ENCODE measurements at regions of chr1 and their contacts with region 1.

Region 1: GRCh38 chr1:46247436-46248121 is at the start of gene RAD54L:
- DNase-seq: peak; percentile 100
- ATAC-seq: peak; percentile 91
- H3K4me3 Mint-ChIP-seq: peak within 1 kb of the TSS; percentile 95
- H3K27ac Mint-ChIP-seq: peak within 1 kb of the TSS; percentile 99
- H3K4me1 Mint-ChIP-seq: peaks cover 24% of the 10 kb centered on the region
- H3K27me3 Mint-ChIP-seq: no peaks in the 10 kb centered on the region
- CTCF ChIP-seq: no peak
- total RNA-seq, gene RAD54L: 64.6 to 65.1 TPM

Region 2: DNA sequence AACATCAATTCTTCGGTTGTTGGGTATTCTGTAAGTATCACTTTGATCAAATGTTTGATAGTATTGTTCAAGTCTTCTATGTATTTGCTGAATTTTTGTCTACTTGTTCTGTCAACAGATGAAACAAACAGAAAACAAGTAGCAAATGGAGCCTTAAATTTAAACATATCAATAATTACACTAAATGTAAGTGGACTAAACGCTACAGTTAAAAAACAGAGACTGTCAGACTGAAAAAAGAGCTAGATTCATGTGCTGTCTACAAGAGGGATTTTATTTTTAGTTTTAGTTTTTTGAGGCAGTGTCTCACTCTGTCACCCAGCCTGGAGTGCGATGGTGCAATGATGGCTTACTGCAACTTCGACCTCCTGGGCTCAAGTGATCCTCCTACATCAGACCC is 10.7 kb before region 1 on chr1:
- CTCF ChIA-PET with region 1: interaction called, 11 read pairs
- POLR2A ChIA-PET with region 1: no interaction called
- intact Hi-C with region 1: no loop called
- DNase-seq: no peak
- ATAC-seq: no peak
- H3K4me3 Mint-ChIP-seq: no peak overlapping the region
- H3K27ac Mint-ChIP-seq: no peak overlapping the region
- H3K4me1 Mint-ChIP-seq: no peaks in the 10 kb centered on the region
- H3K27me3 Mint-ChIP-seq: no peaks in the 10 kb centered on the region
- CTCF ChIP-seq: no peak

Region 3: GRCh38 chr1:46262508-46262907 is 14.9 kb after region 1 on chr1:
- CTCF ChIA-PET with region 1: interaction called, 6 read pairs
- POLR2A ChIA-PET with region 1: interaction called, 27 read pairs
- intact Hi-C with region 1: no loop called
- DNase-seq: no peak
- ATAC-seq: no peak
- H3K4me3 Mint-ChIP-seq: no peak overlapping the region
- H3K27ac Mint-ChIP-seq: no peak overlapping the region
- H3K4me1 Mint-ChIP-seq: no peaks in the 10 kb centered on the region
- H3K27me3 Mint-ChIP-seq: no peaks in the 10 kb centered on the region
- CTCF ChIP-seq: no peak